CD8-positive, alpha-beta T cell (primary cell): ENCODE measurements at regions of chr11 and their contacts with region 1.

Region 1: DNA sequence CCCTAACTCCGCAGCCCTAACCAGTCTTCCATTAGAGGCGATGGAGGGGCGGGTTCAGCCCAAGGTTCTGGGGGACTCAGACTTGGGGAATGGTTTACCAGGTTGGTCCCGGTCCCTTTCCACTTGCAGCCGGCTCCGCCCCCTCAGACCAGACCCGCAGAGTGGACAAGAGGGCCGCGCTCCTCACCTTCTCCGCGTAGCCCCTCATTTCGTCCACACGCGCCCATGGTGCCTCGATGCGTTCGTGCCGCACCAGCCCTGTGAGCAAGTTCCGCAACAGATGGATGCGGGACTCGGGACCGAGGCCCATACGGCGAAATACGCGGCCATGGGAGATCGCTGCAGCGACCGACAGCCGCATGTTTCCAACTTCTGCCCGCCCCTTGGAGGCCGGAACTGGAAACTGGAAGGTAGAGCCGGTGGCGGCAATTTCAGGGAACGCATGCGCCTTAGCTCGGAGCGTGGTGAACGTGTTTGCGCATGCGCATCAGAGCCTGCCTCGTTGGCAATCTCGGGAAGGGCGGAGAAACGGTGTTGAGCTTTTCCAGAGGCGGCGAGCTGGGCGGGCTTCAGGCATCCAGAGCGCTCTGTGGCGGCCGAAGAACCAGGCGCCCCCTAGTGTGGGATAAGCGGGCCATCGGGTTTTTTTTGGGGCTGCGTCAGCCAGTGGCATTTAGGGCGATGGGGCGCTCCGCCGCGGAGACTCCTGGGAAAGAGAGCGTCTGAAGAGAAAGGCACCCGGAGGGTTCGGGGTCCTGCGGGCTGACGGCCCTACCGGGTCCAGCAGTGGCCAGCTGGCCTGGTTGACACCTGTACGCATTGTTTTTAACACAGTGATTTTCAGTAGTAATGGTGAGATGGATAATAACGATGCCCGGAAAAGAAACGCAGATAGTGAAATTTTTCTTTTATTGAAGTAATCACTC is at the start of gene MRPL17:
- DNase-seq: peak; percentile 97 to 100 (median 99)
- ATAC-seq: peak; percentile 95
- H3K4me3 ChIP-seq: peak within 1 kb of the TSS; percentile 87 to 94
- H3K4me3 Mint-ChIP-seq: peak within 1 kb of the TSS; percentile 99
- H3K27ac ChIP-seq: peak within 1 kb of the TSS; percentile 81 to 84
- H3K27ac Mint-ChIP-seq: peak within 1 kb of the TSS; percentile 99
- H3K4me1 ChIP-seq: peaks cover 20% of the 10 kb centered on the region
- H3K4me1 Mint-ChIP-seq: peaks cover 38% of the 10 kb centered on the region
- H3K27me3 ChIP-seq: no peaks in the 10 kb centered on the region
- H3K27me3 Mint-ChIP-seq: no peaks in the 10 kb centered on the region
- CTCF ChIP-seq: peak; percentile 87
- total RNA-seq, gene MRPL17: 11.2 to 12.0 TPM

Region 2: DNA sequence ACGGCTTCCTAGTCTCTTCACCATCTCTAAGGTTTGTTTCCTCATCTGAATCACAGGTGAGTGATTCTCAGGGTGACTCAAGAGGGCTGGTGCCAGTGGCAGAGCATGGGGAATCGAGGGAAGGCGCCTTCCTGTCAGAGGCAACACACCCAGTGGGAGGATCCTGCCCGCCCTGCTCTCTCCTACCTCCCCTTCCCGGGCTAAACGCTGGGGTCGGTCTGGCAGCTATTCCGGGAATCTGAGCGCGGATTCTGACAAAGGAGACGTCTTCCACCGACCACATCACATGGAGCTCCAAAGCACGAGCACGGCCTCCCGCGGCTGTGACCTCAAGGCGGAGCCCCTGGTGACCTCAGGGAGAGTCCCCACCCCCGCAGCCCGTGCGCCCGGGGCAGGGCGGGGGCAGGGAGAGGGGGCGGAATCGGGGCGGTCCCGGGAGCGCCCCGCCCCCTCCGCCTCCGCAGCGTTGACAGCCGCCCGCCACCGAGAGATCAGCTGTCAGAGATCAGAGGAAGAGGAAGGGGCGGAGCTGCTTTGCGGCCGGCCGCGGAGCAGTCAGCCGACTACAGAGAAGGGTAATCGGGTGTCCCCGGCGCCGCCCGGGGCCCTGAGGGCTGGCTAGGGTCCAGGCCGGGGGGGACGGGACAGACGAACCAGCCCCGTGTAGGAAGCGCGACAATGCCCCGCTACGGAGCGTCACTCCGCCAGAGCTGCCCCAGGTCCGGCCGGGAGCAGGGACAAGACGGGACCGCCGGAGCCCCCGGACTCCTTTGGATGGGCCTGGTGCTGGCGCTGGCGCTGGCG is 293.1 kb before region 1 on chr11 and contains the start of gene SMPD1:
- CTCF ChIA-PET with region 1: interaction called, 3 read pairs
- POLR2A ChIA-PET with region 1: no interaction called
- intact Hi-C with region 1: loop called in 1 of 2 experiments (anchors 1 kb)
- DNase-seq: peak; percentile 90 to 97 (median 94)
- ATAC-seq: peak; percentile 88
- H3K4me3 ChIP-seq: peak within 1 kb of the TSS; percentile 84 to 90
- H3K4me3 Mint-ChIP-seq: peak within 1 kb of the TSS; percentile 93
- H3K27ac ChIP-seq: peak within 1 kb of the TSS; percentile 85 to 95
- H3K27ac Mint-ChIP-seq: peak within 1 kb of the TSS; percentile 98
- H3K4me1 ChIP-seq: peaks cover 52% of the 10 kb centered on the region
- H3K4me1 Mint-ChIP-seq: peaks cover 68% of the 10 kb centered on the region
- H3K27me3 ChIP-seq: no peaks in the 10 kb centered on the region
- H3K27me3 Mint-ChIP-seq: no peaks in the 10 kb centered on the region
- CTCF ChIP-seq: no peak
- total RNA-seq, gene SMPD1: 53.4 to 53.7 TPM

Region 3: GRCh38 chr11:6603287-6604080 is 79.7 kb before region 1 on chr11 and contains the starts of genes ILK and RRP8:
- CTCF ChIA-PET with region 1: interaction called, 67 read pairs
- POLR2A ChIA-PET with region 1: interaction called, 97 read pairs
- intact Hi-C with region 1: loop called (anchors 1 kb)
- DNase-seq: peak; percentile 66 to 92 (median 87)
- ATAC-seq: peak; percentile 78
- H3K4me3 ChIP-seq: peak within 1 kb of the TSS; percentile 93 to 97
- H3K4me3 Mint-ChIP-seq: no peak within 1 kb of the TSS
- H3K27ac ChIP-seq: peak within 1 kb of the TSS; percentile 65 to 88
- H3K27ac Mint-ChIP-seq: no peak within 1 kb of the TSS
- H3K4me1 ChIP-seq: peaks cover 60% of the 10 kb centered on the region
- H3K4me1 Mint-ChIP-seq: peaks cover 40% of the 10 kb centered on the region
- H3K27me3 ChIP-seq: no peaks in the 10 kb centered on the region
- H3K27me3 Mint-ChIP-seq: no peaks in the 10 kb centered on the region
- CTCF ChIP-seq: no peak
- total RNA-seq, gene ILK: 26.6 to 31.6 TPM
- total RNA-seq, gene RRP8: 29.1 to 31.3 TPM

Region 4: GRCh38 chr11:6646918-6647679 is 36.1 kb before region 1 on chr11:
- CTCF ChIA-PET with region 1: interaction called, 4 read pairs
- POLR2A ChIA-PET with region 1: interaction called, 9 read pairs
- intact Hi-C with region 1: loop called in 1 of 2 experiments (anchors 2 kb)
- DNase-seq: peak in 8 of 9 experiments; percentile 17 to 76 (median 37)
- ATAC-seq: peak; percentile 61
- H3K4me3 ChIP-seq: peak overlapping the region; percentile 1 to 39
- H3K4me3 Mint-ChIP-seq: no peak overlapping the region
- H3K27ac ChIP-seq: peak overlapping the region; percentile 48 to 80
- H3K27ac Mint-ChIP-seq: no peak overlapping the region
- H3K4me1 ChIP-seq: peaks cover 79% of the 10 kb centered on the region
- H3K4me1 Mint-ChIP-seq: no peaks in the 10 kb centered on the region
- H3K27me3 ChIP-seq: no peaks in the 10 kb centered on the region
- H3K27me3 Mint-ChIP-seq: no peaks in the 10 kb centered on the region
- CTCF ChIP-seq: no peak

Region 5: DNA sequence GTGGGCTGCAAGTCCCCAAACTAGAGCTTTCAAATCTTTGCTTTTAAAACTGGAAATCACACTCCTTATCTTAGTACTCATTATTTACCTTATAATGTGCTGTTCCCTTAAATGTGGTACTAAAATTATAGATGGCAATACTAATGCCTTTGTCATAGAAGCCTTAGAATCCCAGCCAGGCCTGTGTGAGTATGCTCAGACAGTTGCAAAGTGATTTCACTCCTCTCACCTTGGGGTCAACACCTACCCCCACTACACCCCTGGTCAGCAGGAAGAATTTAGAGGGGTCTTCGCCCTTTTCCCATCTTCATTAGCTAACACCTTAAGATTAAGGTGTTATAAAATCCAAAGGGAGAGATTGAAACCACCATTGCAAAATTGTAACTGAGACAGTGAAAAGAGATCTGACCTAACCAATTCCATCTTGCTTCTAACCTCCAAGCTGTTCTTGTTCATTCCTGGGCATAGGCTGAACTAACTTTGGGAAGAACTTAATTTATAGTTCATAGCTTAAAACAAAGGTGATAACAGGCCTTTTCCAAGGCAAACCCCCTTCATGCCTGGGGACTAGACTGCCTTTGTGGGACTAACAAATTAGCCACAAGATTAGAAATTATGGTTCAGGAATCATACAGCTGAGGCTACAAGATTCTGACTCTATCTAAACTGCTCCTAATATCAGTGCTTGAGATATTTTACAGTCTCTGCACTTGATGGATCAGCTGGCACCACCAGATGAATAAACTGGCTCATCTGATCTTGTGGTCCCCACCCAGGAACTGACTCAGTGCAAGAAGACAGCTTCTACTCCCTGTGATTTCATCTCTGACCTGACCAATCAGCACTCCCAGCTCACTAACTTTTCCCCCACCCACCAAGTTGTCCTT is 10.4 kb after region 1 on chr11:
- CTCF ChIA-PET with region 1: interaction called, 16 read pairs
- POLR2A ChIA-PET with region 1: no interaction called
- intact Hi-C with region 1: no loop called
- DNase-seq: peak in 6 of 9 experiments; percentile 24 to 65 (median 33)
- ATAC-seq: peak; percentile 55
- H3K4me3 ChIP-seq: no peak overlapping the region
- H3K4me3 Mint-ChIP-seq: no peak overlapping the region
- H3K27ac ChIP-seq: peak overlapping the region in 1 of 2 experiments; percentile 56
- H3K27ac Mint-ChIP-seq: peak overlapping the region; percentile 13
- H3K4me1 ChIP-seq: peaks cover 13% of the 10 kb centered on the region
- H3K4me1 Mint-ChIP-seq: peaks cover 21% of the 10 kb centered on the region
- H3K27me3 ChIP-seq: no peaks in the 10 kb centered on the region
- H3K27me3 Mint-ChIP-seq: no peaks in the 10 kb centered on the region
- CTCF ChIP-seq: no peak

Region 6: GRCh38 chr11:6757373-6757967 is 74.3 kb after region 1 on chr11:
- CTCF ChIA-PET with region 1: interaction called, 22 read pairs
- POLR2A ChIA-PET with region 1: no interaction called
- intact Hi-C with region 1: no loop called
- DNase-seq: peak; percentile 30 to 82 (median 65)
- ATAC-seq: peak; percentile 80
- H3K4me3 ChIP-seq: no peak overlapping the region
- H3K4me3 Mint-ChIP-seq: no peak overlapping the region
- H3K27ac ChIP-seq: no peak overlapping the region
- H3K27ac Mint-ChIP-seq: no peak overlapping the region
- H3K4me1 ChIP-seq: no peaks in the 10 kb centered on the region
- H3K4me1 Mint-ChIP-seq: peaks cover 15% of the 10 kb centered on the region
- H3K27me3 ChIP-seq: no peaks in the 10 kb centered on the region
- H3K27me3 Mint-ChIP-seq: no peaks in the 10 kb centered on the region
- CTCF ChIP-seq: peak; percentile 74